ENCODE measurements at regions of chr3 and their contacts with region 1.

Region 1: DNA sequence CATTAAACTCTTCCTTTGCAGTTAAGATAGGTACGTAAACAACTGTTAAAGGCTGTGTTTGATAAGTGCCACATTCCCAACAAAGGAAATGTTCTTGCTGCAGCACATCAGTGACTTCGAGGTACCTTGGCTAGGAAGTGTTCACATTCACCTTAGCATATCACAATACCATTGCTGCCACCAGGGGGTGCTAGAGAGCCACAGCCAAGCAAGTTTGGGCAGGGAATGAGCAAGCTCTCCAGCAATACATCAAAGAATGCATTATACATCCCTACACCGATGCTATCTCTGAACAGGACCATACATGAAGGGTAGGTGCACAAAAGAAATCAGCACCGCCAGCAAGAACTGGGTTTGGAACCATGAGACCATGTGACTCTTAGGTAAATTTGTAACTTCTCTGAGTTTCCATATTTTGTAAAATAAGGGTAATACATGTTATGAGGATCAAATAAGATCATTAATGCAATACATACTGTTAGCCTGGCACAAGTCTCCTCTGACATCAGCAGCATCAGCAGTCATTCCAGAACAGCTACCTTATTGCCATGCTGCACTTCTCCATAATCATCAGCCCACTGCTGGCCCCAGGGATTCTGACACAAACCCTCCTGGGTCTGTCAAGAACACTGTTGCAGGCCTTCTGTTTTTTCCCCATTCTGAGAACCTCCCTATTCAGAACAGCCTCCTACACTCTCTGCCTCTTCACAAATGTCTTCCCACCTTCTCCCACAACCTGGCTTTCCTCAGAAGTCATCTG is 37.6 kb downstream of the RYK start:
- DNase-seq: peak; percentile 51
- ATAC-seq: peak; percentile 97
- H3K4me3 ChIP-seq: no peak overlapping the region
- H3K27ac ChIP-seq: no peak overlapping the region
- H3K4me1 ChIP-seq: no peaks in the 10 kb centered on the region; the same call in 1 of the 2 replicates
- H3K27me3 ChIP-seq: no peaks in the 10 kb centered on the region
- CTCF ChIP-seq: peak; percentile 90 to 96 (median 96)
- EP300 ChIP-seq: no peak
- POLR2A ChIP-seq: no peak
- RAD21 ChIP-seq: peak; percentile 85

Region 2: GRCh38 chr3:132722164-132723024 is 1490.7 kb before region 1 on chr3 and contains the start of gene NPHP3:
- CTCF ChIA-PET with region 1: interaction called, 3 read pairs
- POLR2A ChIA-PET with region 1: no interaction called
- RAD21 ChIA-PET with region 1: no interaction called
- SMC1A ChIA-PET with region 1: no interaction called
- in situ Hi-C with region 1: loop called (anchors 25 kb)
- intact Hi-C with region 1: loop called (anchors 10 kb)
- DNase-seq: peak; percentile 67
- ATAC-seq: peak; percentile 93
- H3K4me3 ChIP-seq: peak within 1 kb of the TSS; percentile 85
- H3K27ac ChIP-seq: peak within 1 kb of the TSS; percentile 50
- H3K4me1 ChIP-seq: no peaks in the 10 kb centered on the region
- H3K27me3 ChIP-seq: no peaks in the 10 kb centered on the region
- CTCF ChIP-seq: no peak
- EP300 ChIP-seq: no peak
- POLR2A ChIP-seq: peak; percentile 88
- RAD21 ChIP-seq: no peak
- polyA plus RNA-seq, gene NPHP3: 0.84 to 0.95 TPM

Region 3: DNA sequence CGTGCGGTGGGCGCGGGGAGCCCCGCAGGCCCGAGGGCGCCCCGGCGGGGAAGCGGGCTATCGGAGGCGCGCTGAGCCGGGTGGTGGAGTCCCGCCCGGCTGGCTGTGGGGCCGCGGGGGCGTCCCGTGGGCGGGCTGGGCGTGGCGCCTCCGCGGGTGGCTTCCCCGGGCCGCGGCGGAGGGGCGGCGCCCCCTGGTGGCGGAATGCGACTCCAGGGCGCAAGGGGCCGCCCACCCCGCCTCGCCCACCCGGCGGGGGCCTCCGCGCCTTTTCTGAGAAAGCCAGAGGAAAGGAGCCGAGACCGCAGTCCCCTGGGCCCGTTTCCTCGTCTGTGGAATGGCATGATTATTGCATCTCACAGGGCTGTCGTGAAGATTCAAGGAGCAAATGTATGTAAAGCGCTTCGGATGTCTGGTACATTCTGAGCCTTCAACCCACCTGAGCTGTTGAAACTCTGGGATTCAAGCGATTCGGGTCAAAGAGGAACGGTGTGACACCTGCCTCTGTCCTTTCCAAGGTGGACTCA is 285.5 kb before region 1 on chr3:
- CTCF ChIA-PET with region 1: interaction called, 37 read pairs
- POLR2A ChIA-PET with region 1: no interaction called
- RAD21 ChIA-PET with region 1: interaction called, 4 read pairs
- SMC1A ChIA-PET with region 1: interaction called, 9 read pairs
- in situ Hi-C with region 1: loop called (anchors 10 kb)
- intact Hi-C with region 1: loop called (anchors 1 kb)
- DNase-seq: no peak
- ATAC-seq: peak; percentile 93
- H3K4me3 ChIP-seq: peak overlapping the region; percentile 74
- H3K27ac ChIP-seq: no peak overlapping the region
- H3K4me1 ChIP-seq: peaks cover 2% of the 10 kb centered on the region
- H3K27me3 ChIP-seq: peaks cover 0 to 2% of the 10 kb centered on the region in 2 experiments; a peak in 2 of 4 replicates
- CTCF ChIP-seq: peak; percentile 59 to 72 (median 61); a peak in 5 of 6 replicates
- EP300 ChIP-seq: no peak
- POLR2A ChIP-seq: no peak
- RAD21 ChIP-seq: peak; percentile 57

Region 4: GRCh38 chr3:134232151-134232550 is 19.1 kb after region 1 on chr3:
- CTCF ChIA-PET with region 1: interaction called, 116 read pairs
- POLR2A ChIA-PET with region 1: no interaction called
- RAD21 ChIA-PET with region 1: interaction called, 8 read pairs
- SMC1A ChIA-PET with region 1: interaction called, 8 read pairs
- in situ Hi-C with region 1: no loop called
- intact Hi-C with region 1: no loop called
- DNase-seq: no peak
- ATAC-seq: peak; percentile 77
- H3K4me3 ChIP-seq: no peak overlapping the region
- H3K27ac ChIP-seq: no peak overlapping the region
- H3K4me1 ChIP-seq: peaks cover 4% of the 10 kb centered on the region; the same call in 1 of the 2 replicates
- H3K27me3 ChIP-seq: no peaks in the 10 kb centered on the region
- CTCF ChIP-seq: no peak
- EP300 ChIP-seq: no peak
- POLR2A ChIP-seq: no peak
- RAD21 ChIP-seq: no peak

Region 5: DNA sequence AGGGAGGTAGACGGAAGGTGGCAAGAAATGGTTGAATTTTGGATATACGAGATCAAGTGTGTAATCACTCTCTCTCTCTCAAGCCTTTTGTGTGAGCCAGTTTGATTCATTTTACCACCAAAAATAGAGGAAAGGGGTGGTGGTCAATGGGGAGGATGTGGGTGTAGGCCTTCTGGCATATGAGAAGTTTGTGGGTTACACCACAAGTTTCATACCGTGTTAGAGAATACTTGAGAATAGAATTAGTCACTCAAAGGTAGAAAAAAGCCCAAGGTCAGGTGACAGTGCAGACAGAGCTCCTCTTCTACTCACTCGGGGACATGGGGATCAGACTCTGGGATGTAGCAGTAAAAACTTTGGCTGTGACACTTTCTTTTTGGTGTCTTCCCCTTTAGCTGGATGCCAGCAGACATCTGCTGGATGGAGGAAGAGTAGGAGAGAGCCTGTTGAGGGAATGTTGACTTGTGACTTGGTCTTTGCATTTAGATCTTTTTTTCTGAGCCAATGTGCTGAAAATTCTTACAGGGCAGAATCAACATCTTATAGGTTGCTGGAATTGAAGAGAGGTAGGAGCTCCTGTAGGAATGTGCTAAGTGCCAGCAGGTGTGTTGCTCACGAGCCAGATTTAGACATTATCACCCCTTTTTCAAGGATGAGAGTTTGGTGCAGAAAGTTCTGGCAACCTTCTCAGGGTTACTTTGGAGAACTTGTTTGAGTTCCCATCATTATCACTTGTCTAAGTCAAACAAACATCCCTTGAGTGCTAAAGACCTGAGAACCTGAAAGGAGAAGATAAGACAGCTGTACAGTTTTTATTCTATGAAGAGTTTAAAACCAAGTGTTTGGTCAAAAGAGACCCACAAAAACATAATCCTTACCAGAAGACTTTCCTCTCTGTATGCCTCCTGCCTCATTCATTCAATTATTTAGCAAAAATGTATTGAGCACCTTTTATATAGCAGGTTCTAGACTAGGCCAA is 81.5 kb after region 1 on chr3:
- CTCF ChIA-PET with region 1: interaction called, 10 read pairs
- POLR2A ChIA-PET with region 1: no interaction called
- RAD21 ChIA-PET with region 1: no interaction called
- SMC1A ChIA-PET with region 1: interaction called, 4 read pairs
- in situ Hi-C with region 1: no loop called
- intact Hi-C with region 1: no loop called
- DNase-seq: peak; percentile 75
- ATAC-seq: peak; percentile 100
- H3K4me3 ChIP-seq: no peak overlapping the region
- H3K27ac ChIP-seq: no peak overlapping the region
- H3K4me1 ChIP-seq: peaks cover 11% of the 10 kb centered on the region
- H3K27me3 ChIP-seq: peaks cover 0 to 5% of the 10 kb centered on the region in 2 experiments; a peak in 1 of 4 replicates
- CTCF ChIP-seq: no peak
- EP300 ChIP-seq: peak; percentile 38 to 51; a peak in 2 of 4 replicates
- POLR2A ChIP-seq: no peak
- RAD21 ChIP-seq: no peak

Region 6: GRCh38 chr3:134373994-134374790 is 161.1 kb after region 1 on chr3 and contains the start of gene AMOTL2:
- CTCF ChIA-PET with region 1: interaction called, 3 read pairs
- POLR2A ChIA-PET with region 1: no interaction called
- RAD21 ChIA-PET with region 1: no interaction called
- SMC1A ChIA-PET with region 1: no interaction called
- in situ Hi-C with region 1: no loop called
- intact Hi-C with region 1: loop called (anchors 10 kb)
- DNase-seq: no peak
- ATAC-seq: peak; percentile 62
- H3K4me3 ChIP-seq: peak within 1 kb of the TSS; percentile 61; the same call in 1 of the 2 replicates
- H3K27ac ChIP-seq: no peak within 1 kb of the TSS
- H3K4me1 ChIP-seq: no peaks in the 10 kb centered on the region; the same call in 1 of the 2 replicates
- H3K27me3 ChIP-seq: peaks cover 7 to 19% of the 10 kb centered on the region in 2 experiments; a peak in 3 of 4 replicates
- CTCF ChIP-seq: no peak
- EP300 ChIP-seq: no peak
- POLR2A ChIP-seq: no peak
- RAD21 ChIP-seq: no peak
- polyA plus RNA-seq, gene AMOTL2: not detected

Region 7: DNA sequence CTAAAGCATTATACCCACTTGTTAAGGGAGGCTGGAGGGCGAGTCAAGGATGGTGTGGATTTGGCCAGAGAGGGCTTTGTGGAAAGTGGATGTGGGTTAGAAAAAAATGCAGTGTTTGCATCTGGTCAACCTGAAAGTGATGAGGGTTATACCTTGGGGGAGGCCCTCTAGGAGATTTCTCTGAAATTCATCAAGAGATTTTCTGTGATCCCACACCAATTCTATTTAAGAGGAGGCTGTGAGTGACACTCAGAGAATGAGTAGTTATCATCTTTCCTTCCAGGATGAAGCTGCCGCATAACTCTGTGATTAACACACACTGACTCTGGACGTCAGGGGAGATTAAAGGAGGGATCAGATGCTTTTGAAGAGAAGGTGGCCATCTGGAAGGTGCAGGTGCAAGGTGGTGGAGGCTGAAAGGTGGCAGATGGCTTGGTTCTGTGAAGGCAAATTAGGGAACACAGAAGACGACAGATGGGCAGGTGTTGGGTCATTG is 217.9 kb after region 1 on chr3:
- CTCF ChIA-PET with region 1: no interaction called
- POLR2A ChIA-PET with region 1: no interaction called
- RAD21 ChIA-PET with region 1: no interaction called
- SMC1A ChIA-PET with region 1: no interaction called
- in situ Hi-C with region 1: no loop called
- intact Hi-C with region 1: no loop called
- DNase-seq: no peak
- ATAC-seq: no peak
- H3K4me3 ChIP-seq: no peak overlapping the region
- H3K27ac ChIP-seq: no peak overlapping the region
- H3K4me1 ChIP-seq: no peaks in the 10 kb centered on the region
- H3K27me3 ChIP-seq: no peaks in the 10 kb centered on the region; a peak in 1 of 4 replicates
- CTCF ChIP-seq: no peak
- EP300 ChIP-seq: no peak
- POLR2A ChIP-seq: no peak
- RAD21 ChIP-seq: no peak

Measured in GM12878 (cell line).